ENCODE measurements at regions of chr14 and their contacts with region 1.

Region 1: DNA sequence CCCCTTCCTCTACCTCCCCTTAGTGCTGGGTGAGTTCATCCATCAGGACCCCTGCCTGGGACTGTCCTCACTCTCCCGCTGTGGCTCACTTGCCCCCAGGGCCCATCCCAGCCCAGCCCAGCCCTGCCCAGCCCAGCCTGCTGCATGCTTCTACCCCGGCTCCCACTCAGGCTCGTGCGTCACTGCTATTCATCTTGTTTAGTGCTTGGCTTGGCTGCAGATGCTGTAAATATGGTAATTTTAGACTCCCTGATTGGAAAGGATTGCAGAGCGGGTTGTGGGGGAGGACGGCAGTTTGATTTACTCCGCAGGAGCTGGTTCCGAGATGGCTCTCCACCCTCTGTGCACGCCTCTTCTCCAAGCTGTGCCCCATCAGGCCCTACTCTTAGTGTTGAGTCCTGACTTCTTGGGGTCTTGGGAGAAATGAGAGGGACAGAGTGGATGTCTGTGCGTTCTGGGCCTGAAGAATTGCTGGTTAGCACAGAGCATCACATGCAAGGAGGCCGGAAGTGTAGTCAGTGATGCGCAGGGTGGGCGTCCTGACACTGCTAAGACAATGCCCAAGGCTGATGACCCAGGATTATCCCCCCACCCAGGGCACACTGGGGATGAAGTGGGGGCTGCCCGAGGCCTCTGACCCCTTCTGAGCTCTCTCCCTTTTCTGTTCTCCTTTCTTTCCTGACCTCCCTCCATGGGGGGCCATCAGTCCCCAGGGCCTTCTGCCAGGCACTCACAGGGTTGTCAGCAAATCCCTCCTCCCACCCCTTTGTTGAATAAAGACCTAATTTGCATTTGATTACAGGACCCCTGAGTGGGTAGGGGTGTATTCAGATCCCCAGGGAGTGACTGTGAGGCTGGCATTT is 244.4 kb downstream of the ZFP36L1 start:
- DNase-seq: peak; percentile 89 to 96 (median 93)
- H3K4me3 ChIP-seq: no peak overlapping the region
- H3K27ac ChIP-seq: peak overlapping the region; percentile 78 to 92
- H3K4me1 ChIP-seq: peaks cover 40% of the 10 kb centered on the region
- H3K27me3 ChIP-seq: no peaks in the 10 kb centered on the region
- CTCF ChIP-seq: no peak
- EP300 ChIP-seq: peak; percentile 85
- POLR2A ChIP-seq: peak; percentile 49

Region 2: DNA sequence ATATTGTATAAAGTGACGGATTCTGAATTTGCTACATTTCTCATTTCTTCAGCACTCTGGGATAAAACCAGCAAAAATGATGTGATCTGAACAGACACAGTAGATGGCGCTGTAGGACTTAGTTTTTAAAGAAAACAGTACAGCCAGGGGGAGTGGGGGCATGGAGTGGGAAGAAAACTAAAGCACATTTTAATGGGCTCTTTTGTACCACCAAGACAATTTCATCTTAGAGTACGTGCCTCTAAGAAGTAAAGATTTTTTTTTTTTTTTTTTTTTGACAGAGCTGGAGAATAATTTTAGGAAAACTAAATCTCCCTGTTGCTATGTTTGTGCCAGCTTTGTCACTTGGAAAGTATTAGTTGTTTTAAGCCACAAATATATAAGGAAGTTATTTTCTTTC is 604.5 kb before region 1 on chr14:
- intact Hi-C with region 1: loop called in 1 of 4 experiments (anchors 10 kb)
- DNase-seq: peak; percentile 62 to 91 (median 80)
- H3K4me3 ChIP-seq: no peak overlapping the region
- H3K27ac ChIP-seq: peak overlapping the region in 1 of 2 donors; percentile 49
- H3K4me1 ChIP-seq: peaks cover 14% of the 10 kb centered on the region
- H3K27me3 ChIP-seq: no peaks in the 10 kb centered on the region
- CTCF ChIP-seq: peak; percentile 69 to 94 (median 94)
- EP300 ChIP-seq: no peak
- POLR2A ChIP-seq: no peak

Region 3: GRCh38 chr14:68392393-68393141 is 155.9 kb before region 1 on chr14:
- intact Hi-C with region 1: loop called in 1 of 4 experiments (anchors 10 kb)
- DNase-seq: peak in 4 of 5 donors; percentile 65 to 75 (median 68)
- H3K4me3 ChIP-seq: no peak overlapping the region
- H3K27ac ChIP-seq: peak overlapping the region; percentile 17 to 76
- H3K4me1 ChIP-seq: peaks cover 43% of the 10 kb centered on the region
- H3K27me3 ChIP-seq: no peaks in the 10 kb centered on the region
- CTCF ChIP-seq: no peak
- EP300 ChIP-seq: no peak
- POLR2A ChIP-seq: no peak

Region 4: GRCh38 chr14:68663385-68664076 is 115.1 kb after region 1 on chr14:
- intact Hi-C with region 1: loop called in 2 of 4 experiments (anchors 5 to 10 kb)
- DNase-seq: peak in 2 of 5 donors; percentile 7 to 28
- H3K4me3 ChIP-seq: no peak overlapping the region
- H3K27ac ChIP-seq: peak overlapping the region in 1 of 2 donors; percentile 76
- H3K4me1 ChIP-seq: peaks cover 41% of the 10 kb centered on the region
- H3K27me3 ChIP-seq: no peaks in the 10 kb centered on the region
- CTCF ChIP-seq: peak in 1 of 3 donors; percentile 9
- EP300 ChIP-seq: no peak
- POLR2A ChIP-seq: no peak

Measured in ovary (tissue), 10 donors.